HepG2 (cell line): ENCODE measurements at regions of chr7 and their contacts with region 1.

Region 1: GRCh38 chr7:2241580-2242540 is at the starts of genes MRM2 and NUDT1:
- DNase-seq: peak; percentile 74
- ATAC-seq: peak; percentile 90
- H3K4me3 ChIP-seq: peak within 1 kb of the TSS; percentile 91 to 98 (median 98)
- H3K27ac ChIP-seq: peak within 1 kb of the TSS; percentile 72
- H3K4me1 ChIP-seq: peaks cover 45% of the 10 kb centered on the region
- H3K27me3 ChIP-seq: no peaks in the 10 kb centered on the region; a peak in 1 of 5 replicates
- CTCF ChIP-seq: peak; percentile 44
- EP300 ChIP-seq: no peak; a peak in 1 of 4 replicates
- POLR2A ChIP-seq: peak; percentile 79 to 95
- RAD21 ChIP-seq: peak; percentile 65; the same call in 1 of the 2 replicates
- total RNA-seq, gene MRM2: 34.2 and 42.6 TPM in 2 replicates
- total RNA-seq, gene NUDT1: 26.8 and 32.7 TPM in 2 replicates

Region 2: GRCh38 chr7:2214636-2215035 is 27.2 kb before region 1 on chr7:
- CTCF ChIA-PET with region 1: no interaction called
- POLR2A ChIA-PET with region 1: no interaction called
- in situ Hi-C with region 1: no loop called
- intact Hi-C with region 1: no loop called
- DNase-seq: no peak
- ATAC-seq: no peak
- H3K4me3 ChIP-seq: no peak overlapping the region
- H3K27ac ChIP-seq: no peak overlapping the region
- H3K4me1 ChIP-seq: no peaks in the 10 kb centered on the region
- H3K27me3 ChIP-seq: no peaks in the 10 kb centered on the region
- CTCF ChIP-seq: no peak
- EP300 ChIP-seq: no peak
- POLR2A ChIP-seq: no peak
- RAD21 ChIP-seq: no peak

Region 3: DNA sequence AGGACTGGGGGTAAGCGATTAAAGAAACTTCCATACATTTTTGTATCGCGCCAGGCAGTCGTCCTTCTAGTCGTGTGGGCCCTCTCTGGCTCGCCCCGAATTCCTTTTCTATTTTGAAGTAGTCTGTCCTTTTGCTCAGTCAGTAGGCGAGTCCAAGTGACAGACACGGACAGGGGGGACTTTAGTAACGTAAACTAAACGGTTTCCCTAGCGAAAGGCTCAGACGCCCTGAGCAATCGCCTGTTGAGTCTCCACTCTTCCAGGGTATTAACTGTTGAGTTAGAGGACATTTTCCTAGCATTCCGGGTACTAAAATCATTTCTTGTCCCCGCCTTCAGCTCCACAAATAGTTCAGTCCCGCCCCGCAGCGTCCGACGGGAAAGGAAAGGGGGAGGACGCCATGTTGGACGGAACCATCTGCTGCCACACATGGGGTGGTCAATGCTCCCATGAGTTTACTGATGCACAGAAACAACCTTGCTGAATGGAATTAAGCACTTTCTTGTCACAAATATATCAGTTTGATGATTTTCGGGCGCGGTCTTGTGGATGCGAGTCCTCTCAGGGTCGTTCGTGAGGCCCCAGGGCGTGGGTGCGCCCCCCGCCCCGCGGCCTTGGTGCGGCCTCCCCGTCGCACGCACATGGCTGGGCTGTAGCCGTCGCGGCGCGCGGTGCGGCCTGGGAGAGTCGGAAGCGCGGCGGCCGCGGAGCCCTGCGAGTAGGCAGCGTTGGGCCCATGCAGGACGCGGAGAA is 112.5 kb after region 1 on chr7 and contains the start of gene EIF3B:
- CTCF ChIA-PET with region 1: no interaction called
- POLR2A ChIA-PET with region 1: interaction called, 4 read pairs
- in situ Hi-C with region 1: loop called (anchors 5 kb)
- intact Hi-C with region 1: loop called (anchors 2 kb)
- DNase-seq: peak; percentile 87
- ATAC-seq: peak; percentile 89
- H3K4me3 ChIP-seq: peak within 1 kb of the TSS; percentile 96 to 98 (median 97)
- H3K27ac ChIP-seq: peak within 1 kb of the TSS; percentile 100
- H3K4me1 ChIP-seq: peaks cover 53% of the 10 kb centered on the region
- H3K27me3 ChIP-seq: no peaks in the 10 kb centered on the region; a peak in 1 of 5 replicates
- CTCF ChIP-seq: no peak
- EP300 ChIP-seq: no peak
- POLR2A ChIP-seq: peak; percentile 81 to 86
- RAD21 ChIP-seq: no peak; the same call in 1 of the 2 replicates
- total RNA-seq, gene EIF3B: 241 and 244 TPM in 2 replicates